Mammary epithelial cell (primary cell): ENCODE measurements at regions of chr5 and their contacts with region 1.

Region 1: DNA sequence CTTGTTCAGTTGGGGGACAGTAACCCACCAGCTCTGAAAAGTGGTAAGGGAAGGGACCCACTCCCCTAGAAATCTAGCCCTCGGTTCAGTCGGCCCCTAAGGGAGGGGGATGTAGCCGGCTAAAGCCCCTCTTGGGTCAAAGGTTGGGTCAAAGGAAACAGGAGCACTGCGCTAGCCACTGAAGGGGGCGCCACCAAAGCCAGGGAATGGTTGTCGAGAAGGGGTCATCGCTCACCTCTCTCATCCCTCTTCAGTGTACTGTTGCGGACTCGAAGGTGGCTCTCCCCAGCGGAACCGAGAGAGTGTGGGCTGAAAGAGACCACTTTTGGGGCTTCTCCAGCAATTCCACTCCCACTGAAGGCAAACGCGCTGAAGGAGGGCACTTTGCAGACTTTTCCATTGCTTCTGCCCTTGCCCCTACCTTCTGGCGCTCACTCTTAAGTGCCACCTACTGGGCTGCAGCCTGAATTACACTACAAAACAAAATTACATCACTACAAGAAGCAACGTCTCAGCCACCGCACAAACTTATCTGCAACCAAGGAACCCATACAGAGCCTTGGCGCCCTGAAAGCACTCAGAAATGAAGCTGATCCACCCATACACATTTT is 396.9 kb downstream of the PDE4D start:
- DNase-seq: no peak
- H3K4me3 ChIP-seq: no peak overlapping the region
- H3K27ac ChIP-seq: no peak overlapping the region
- H3K4me1 ChIP-seq: no peaks in the 10 kb centered on the region
- H3K27me3 ChIP-seq: no peaks in the 10 kb centered on the region
- CTCF ChIP-seq: peak; percentile 62 to 70

Region 2: GRCh38 chr5:59390074-59390659 is 106.5 kb before region 1 on chr5:
- CTCF ChIA-PET with region 1: no interaction called
- dilution Hi-C with region 1: no loop called
- in situ Hi-C with region 1: no loop called
- intact Hi-C with region 1: loop called (anchors 1 kb)
- DNase-seq: no peak
- H3K4me3 ChIP-seq: no peak overlapping the region
- H3K27ac ChIP-seq: no peak overlapping the region
- H3K4me1 ChIP-seq: no peaks in the 10 kb centered on the region
- H3K27me3 ChIP-seq: no peaks in the 10 kb centered on the region
- CTCF ChIP-seq: peak; percentile 53 to 68

Region 3: GRCh38 chr5:59660737-59661136 is 164.1 kb after region 1 on chr5:
- CTCF ChIA-PET with region 1: no interaction called
- dilution Hi-C with region 1: no loop called
- in situ Hi-C with region 1: loop called (anchors 10 kb)
- intact Hi-C with region 1: no loop called
- DNase-seq: no peak
- H3K4me3 ChIP-seq: no peak overlapping the region
- H3K27ac ChIP-seq: no peak overlapping the region
- H3K4me1 ChIP-seq: no peaks in the 10 kb centered on the region
- H3K27me3 ChIP-seq: no peaks in the 10 kb centered on the region
- CTCF ChIP-seq: peak; percentile 23 to 59